GM13977 (cell line): ENCODE measurements at regions of chr18 and their contacts with region 1.

Region 1: GRCh38 chr18:3593904-3594661 is 144.1 kb downstream of the TGIF1 start:
- DNase-seq: peak; percentile 67
- CTCF ChIP-seq: peak; percentile 90

Region 2: GRCh38 chr18:3451183-3451988 is 142.7 kb before region 1 on chr18:
- in situ Hi-C with region 1: loop called (anchors 25 kb)
- DNase-seq: peak; percentile 54
- CTCF ChIP-seq: no peak

Region 3: GRCh38 chr18:3665780-3666525 is 71.9 kb after region 1 on chr18:
- in situ Hi-C with region 1: loop called (anchors 10 kb)
- DNase-seq: peak; percentile 72
- CTCF ChIP-seq: peak; percentile 84